CD8-positive, alpha-beta memory T cell (primary cell): ENCODE measurements at regions of chr13 and their contacts with region 1.

Region 1: DNA sequence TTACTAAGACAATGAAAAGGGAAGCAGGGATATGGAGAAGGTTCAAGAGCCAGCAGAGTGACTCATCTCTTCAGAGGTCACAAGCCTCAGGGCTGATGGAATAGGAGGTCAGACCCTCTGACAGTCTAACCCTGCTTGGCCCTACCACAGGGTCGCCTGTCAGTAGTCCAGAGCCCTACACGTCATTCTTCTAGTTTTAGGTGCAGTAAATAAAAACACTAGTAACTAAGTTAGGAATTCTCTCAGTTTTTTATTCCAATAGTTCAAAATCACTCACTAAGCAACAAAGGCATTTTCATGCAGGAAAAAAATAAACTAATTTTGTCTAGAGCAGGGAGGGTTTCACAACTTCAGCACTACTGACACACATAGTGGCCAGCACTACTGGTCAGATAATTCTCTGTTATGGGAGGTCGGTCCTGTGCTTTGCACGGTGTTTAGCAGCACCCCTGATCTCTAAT is 27.2 kb downstream of the FOXO1 start:
- DNase-seq: no peak
- H3K4me3 ChIP-seq: no peak overlapping the region
- H3K4me3 Mint-ChIP-seq: peak overlapping the region in 1 of 7 donors; percentile 33
- H3K27ac ChIP-seq: no peak overlapping the region
- H3K27ac Mint-ChIP-seq: peak overlapping the region in 3 of 8 donors; percentile 5 to 68 (median 55)
- H3K4me1 ChIP-seq: peaks cover 90% of the 10 kb centered on the region
- H3K4me1 Mint-ChIP-seq: peaks cover 81 to 93% (median 92%) of the 10 kb centered on the region in 3 donors
- H3K27me3 ChIP-seq: no peaks in the 10 kb centered on the region
- H3K27me3 Mint-ChIP-seq: no peaks in the 10 kb centered on the region

Region 2: GRCh38 chr13:40410314-40410713 is 228.9 kb before region 1 on chr13:
- CTCF ChIA-PET with region 1: no interaction called
- POLR2A ChIA-PET with region 1: interaction called, 13 read pairs
- DNase-seq: no peak
- H3K4me3 ChIP-seq: no peak overlapping the region
- H3K4me3 Mint-ChIP-seq: no peak overlapping the region
- H3K27ac ChIP-seq: no peak overlapping the region
- H3K27ac Mint-ChIP-seq: no peak overlapping the region
- H3K4me1 ChIP-seq: no peaks in the 10 kb centered on the region
- H3K4me1 Mint-ChIP-seq: peaks cover 0 to 5% (median 0%) of the 10 kb centered on the region in 3 donors
- H3K27me3 ChIP-seq: no peaks in the 10 kb centered on the region
- H3K27me3 Mint-ChIP-seq: peaks cover 0 to 2% of the 10 kb centered on the region in 2 donors